ENCODE measurements at regions of chr1 and their contacts with region 1.

Region 1: DNA sequence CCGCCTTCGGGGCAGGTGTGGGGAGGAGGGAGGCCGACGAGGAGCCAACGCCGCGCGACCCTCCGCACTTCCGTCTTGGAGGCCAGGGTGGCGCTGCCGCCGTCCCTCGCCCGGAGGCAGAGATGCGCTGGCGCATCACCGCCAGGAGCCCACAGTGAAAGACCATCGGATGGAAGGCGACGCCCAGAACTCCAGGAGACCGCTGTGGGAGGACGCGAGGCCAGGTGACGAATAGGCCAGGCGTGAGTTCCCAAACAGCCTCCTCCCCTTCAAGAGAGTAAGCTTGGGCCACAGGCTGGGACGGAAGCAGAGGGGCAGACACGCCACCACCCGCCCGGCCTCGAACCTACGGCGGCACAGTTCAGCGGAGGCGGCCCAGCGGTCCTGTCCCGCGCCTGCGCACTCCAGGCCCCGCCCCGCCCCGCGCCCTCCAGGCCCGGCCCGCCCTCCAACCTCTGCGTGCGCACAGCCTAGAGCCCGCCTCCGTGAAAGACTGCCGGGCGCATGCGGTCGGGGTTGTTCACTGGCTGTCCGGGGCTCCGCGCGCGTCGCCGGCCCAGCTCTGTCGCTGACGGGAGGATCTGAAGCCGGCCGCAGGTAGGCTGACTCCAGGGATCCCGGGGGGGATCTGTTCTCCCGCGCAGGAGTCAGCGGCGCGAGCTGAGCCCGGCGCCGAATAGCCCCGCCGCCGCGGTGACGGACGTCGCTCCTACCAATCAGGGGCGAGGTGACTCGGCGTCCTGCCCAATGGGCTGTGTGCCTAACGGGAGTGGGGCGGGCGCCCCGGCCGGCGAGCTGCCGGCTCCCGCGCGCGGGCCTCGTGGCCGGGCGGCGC is at the start of gene CTPS1:
- DNase-seq: peak; percentile 88 to 97 (median 95)
- ATAC-seq: peak; percentile 92
- H3K4me3 ChIP-seq: peak within 1 kb of the TSS; percentile 62
- H3K4me3 Mint-ChIP-seq: peak within 1 kb of the TSS; percentile 78 to 98 (median 92)
- H3K27ac ChIP-seq: peak within 1 kb of the TSS; percentile 97
- H3K27ac Mint-ChIP-seq: peak within 1 kb of the TSS; percentile 84 to 97 (median 94)
- H3K4me1 ChIP-seq: peaks cover 10 to 11% of the 10 kb centered on the region in 2 donors
- H3K4me1 Mint-ChIP-seq: peaks cover 17 to 42% (median 29%) of the 10 kb centered on the region in 7 donors
- H3K27me3 ChIP-seq: no peaks in the 10 kb centered on the region
- H3K27me3 Mint-ChIP-seq: no peaks in the 10 kb centered on the region
- total RNA-seq, gene CTPS1: 16.4 to 57.6 (median 40.6) TPM

Region 2: GRCh38 chr1:40630488-40631381 is 348.7 kb before region 1 on chr1:
- CTCF ChIA-PET with region 1: no interaction called
- POLR2A ChIA-PET with region 1: no interaction called
- intact Hi-C with region 1: no loop called
- DNase-seq: no peak
- ATAC-seq: no peak
- H3K4me3 ChIP-seq: no peak overlapping the region
- H3K4me3 Mint-ChIP-seq: no peak overlapping the region
- H3K27ac ChIP-seq: no peak overlapping the region
- H3K27ac Mint-ChIP-seq: peak overlapping the region in 1 of 9 donors; percentile 62
- H3K4me1 ChIP-seq: peaks cover 0 to 21% of the 10 kb centered on the region in 2 donors
- H3K4me1 Mint-ChIP-seq: peaks cover 0 to 30% (median 9%) of the 10 kb centered on the region in 7 donors
- H3K27me3 ChIP-seq: no peaks in the 10 kb centered on the region
- H3K27me3 Mint-ChIP-seq: no peaks in the 10 kb centered on the region

Region 3: DNA sequence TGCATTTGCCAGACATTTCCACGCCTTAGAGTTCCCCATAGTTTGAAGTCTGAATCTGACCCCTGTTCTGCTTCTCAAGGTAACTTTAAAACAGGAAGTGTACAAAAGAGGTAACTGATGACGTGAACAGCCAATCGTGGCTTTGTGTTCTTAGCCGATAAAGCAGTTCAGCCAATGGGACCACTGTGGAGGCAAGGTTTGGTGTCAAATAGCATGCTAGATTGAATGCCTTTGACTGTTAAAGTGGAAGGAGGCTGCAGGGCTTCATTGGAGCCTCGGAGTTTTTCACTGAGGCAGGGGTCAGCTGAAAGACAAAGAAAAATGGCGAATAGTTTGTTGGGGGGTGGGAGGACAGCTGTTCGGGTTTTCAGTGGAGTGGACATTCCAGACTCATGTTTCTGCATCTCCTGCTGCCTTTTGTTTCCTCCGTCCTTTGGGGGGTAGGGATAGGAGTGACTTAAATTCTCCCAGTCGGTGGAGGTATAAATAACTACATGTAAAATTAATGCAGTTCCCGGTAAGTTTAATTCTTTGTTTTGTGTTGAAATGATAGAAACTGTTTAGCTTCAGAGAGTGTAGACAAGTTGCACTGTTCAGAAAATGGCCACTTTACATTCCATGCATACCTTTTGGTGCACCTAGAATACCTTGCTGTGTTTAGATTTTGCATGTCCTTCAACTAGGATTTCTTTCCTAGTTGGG is 270.2 kb before region 1 on chr1:
- CTCF ChIA-PET with region 1: no interaction called
- POLR2A ChIA-PET with region 1: no interaction called
- intact Hi-C with region 1: loop called in 1 of 2 experiments (anchors 5 kb)
- DNase-seq: peak; percentile 28 to 91 (median 88)
- ATAC-seq: peak; percentile 97
- H3K4me3 ChIP-seq: peak overlapping the region; percentile 68
- H3K4me3 Mint-ChIP-seq: peak overlapping the region; percentile 90 to 99 (median 94)
- H3K27ac ChIP-seq: peak overlapping the region; percentile 82
- H3K27ac Mint-ChIP-seq: peak overlapping the region; percentile 89 to 98 (median 93)
- H3K4me1 ChIP-seq: peaks cover 41 to 53% of the 10 kb centered on the region in 2 donors
- H3K4me1 Mint-ChIP-seq: peaks cover 40 to 78% (median 71%) of the 10 kb centered on the region in 7 donors
- H3K27me3 ChIP-seq: no peaks in the 10 kb centered on the region
- H3K27me3 Mint-ChIP-seq: no peaks in the 10 kb centered on the region

Region 4: GRCh38 chr1:40802078-40802741 is 177.2 kb before region 1 on chr1:
- CTCF ChIA-PET with region 1: no interaction called
- POLR2A ChIA-PET with region 1: no interaction called
- intact Hi-C with region 1: loop called (anchors 2 to 5 kb)
- DNase-seq: peak; percentile 76 to 87 (median 84)
- ATAC-seq: peak; percentile 98
- H3K4me3 ChIP-seq: peak overlapping the region; percentile 65
- H3K4me3 Mint-ChIP-seq: peak overlapping the region; percentile 70 to 89 (median 78)
- H3K27ac ChIP-seq: peak overlapping the region; percentile 77
- H3K27ac Mint-ChIP-seq: peak overlapping the region; percentile 69 to 92 (median 87)
- H3K4me1 ChIP-seq: peaks cover 16 to 21% of the 10 kb centered on the region in 2 donors
- H3K4me1 Mint-ChIP-seq: peaks cover 15 to 41% (median 31%) of the 10 kb centered on the region in 7 donors
- H3K27me3 ChIP-seq: no peaks in the 10 kb centered on the region
- H3K27me3 Mint-ChIP-seq: peaks cover 0 to 2% (median 0%) of the 10 kb centered on the region in 5 donors

Region 5: GRCh38 chr1:41003640-41004220 is 24.3 kb after region 1 on chr1:
- CTCF ChIA-PET with region 1: interaction called, 5 read pairs
- POLR2A ChIA-PET with region 1: interaction called, 14 read pairs
- intact Hi-C with region 1: loop called (anchors 1 to 2 kb)
- DNase-seq: peak; percentile 52 to 90 (median 85)
- ATAC-seq: peak; percentile 99
- H3K4me3 ChIP-seq: no peak overlapping the region
- H3K4me3 Mint-ChIP-seq: peak overlapping the region in 7 of 10 donors; percentile 17 to 59 (median 36)
- H3K27ac ChIP-seq: peak overlapping the region; percentile 5
- H3K27ac Mint-ChIP-seq: peak overlapping the region in 8 of 9 donors; percentile 22 to 79 (median 60)
- H3K4me1 ChIP-seq: peaks cover 9 to 12% of the 10 kb centered on the region in 2 donors
- H3K4me1 Mint-ChIP-seq: peaks cover 12 to 26% (median 22%) of the 10 kb centered on the region in 7 donors
- H3K27me3 ChIP-seq: no peaks in the 10 kb centered on the region
- H3K27me3 Mint-ChIP-seq: no peaks in the 10 kb centered on the region

Region 6: GRCh38 chr1:41241782-41242341 is 262.4 kb after region 1 on chr1 and contains the start of gene SCMH1:
- CTCF ChIA-PET with region 1: no interaction called
- POLR2A ChIA-PET with region 1: interaction called, 3 read pairs
- intact Hi-C with region 1: loop called in 1 of 2 experiments (anchors 1 kb)
- DNase-seq: peak; percentile 31 to 67 (median 55)
- ATAC-seq: peak; percentile 77
- H3K4me3 ChIP-seq: peak within 1 kb of the TSS; percentile 57
- H3K4me3 Mint-ChIP-seq: peak within 1 kb of the TSS; percentile 76 to 92 (median 89)
- H3K27ac ChIP-seq: peak within 1 kb of the TSS; percentile 69
- H3K27ac Mint-ChIP-seq: peak within 1 kb of the TSS; percentile 75 to 94 (median 89)
- H3K4me1 ChIP-seq: peaks cover 10 to 13% of the 10 kb centered on the region in 2 donors
- H3K4me1 Mint-ChIP-seq: peaks cover 7 to 35% (median 27%) of the 10 kb centered on the region in 7 donors
- H3K27me3 ChIP-seq: no peaks in the 10 kb centered on the region
- H3K27me3 Mint-ChIP-seq: peaks cover 0 to 5% (median 0%) of the 10 kb centered on the region in 5 donors
- total RNA-seq, gene SCMH1: 16.7 to 18.6 (median 18.2) TPM

Region 7: GRCh38 chr1:41381692-41382477 is 402.4 kb after region 1 on chr1:
- CTCF ChIA-PET with region 1: no interaction called
- POLR2A ChIA-PET with region 1: no interaction called
- intact Hi-C with region 1: no loop called
- DNase-seq: peak in 1 of 9 donors; percentile 43
- ATAC-seq: peak; percentile 79
- H3K4me3 ChIP-seq: peak overlapping the region; percentile 17
- H3K4me3 Mint-ChIP-seq: peak overlapping the region; percentile 75 to 92 (median 83)
- H3K27ac ChIP-seq: no peak overlapping the region
- H3K27ac Mint-ChIP-seq: peak overlapping the region in 2 of 9 donors; percentile 38 to 73
- H3K4me1 ChIP-seq: no peaks in the 10 kb centered on the region
- H3K4me1 Mint-ChIP-seq: peaks cover 0 to 18% (median 14%) of the 10 kb centered on the region in 7 donors
- H3K27me3 ChIP-seq: peaks cover 0 to 9% of the 10 kb centered on the region in 2 donors
- H3K27me3 Mint-ChIP-seq: peaks cover 65 to 74% (median 68%) of the 10 kb centered on the region in 5 donors

Measured in naive thymus-derived CD4-positive, alpha-beta T cell (primary cell).